Ascending aorta (tissue), 2 donors: ENCODE measurements at regions of chr17 and their contacts with region 1.

Region 1: DNA sequence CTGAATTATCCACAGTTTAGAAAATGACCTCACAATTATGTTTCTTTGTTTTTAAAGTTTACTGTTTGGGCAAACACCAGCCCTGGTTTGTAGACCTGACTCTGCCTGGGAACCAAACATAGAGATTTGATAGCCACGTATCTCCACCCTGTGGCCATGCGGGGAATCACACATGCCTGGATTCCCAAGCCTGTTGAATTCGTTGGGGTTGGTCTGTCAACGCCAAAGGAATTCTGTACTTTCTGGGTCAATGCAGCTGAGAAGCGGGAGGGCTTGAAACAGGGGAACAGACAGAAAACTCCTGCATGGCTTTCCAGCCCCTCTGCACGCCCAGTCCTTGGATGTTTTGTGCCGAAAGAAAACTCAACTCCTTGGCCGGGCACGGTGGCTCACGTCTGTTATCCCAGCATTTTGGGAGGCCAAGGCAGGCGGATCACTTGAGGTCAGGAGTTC is 27.0 kb downstream of the CD300A start:
- DNase-seq: peak; percentile 21 to 81
- H3K4me3 ChIP-seq: no peak overlapping the region
- H3K27ac ChIP-seq: no peak overlapping the region
- H3K4me1 ChIP-seq: no peaks in the 10 kb centered on the region
- H3K27me3 ChIP-seq: no peaks in the 10 kb centered on the region
- CTCF ChIP-seq: peak; percentile 86 to 90 (median 89)

Region 2: GRCh38 chr17:74368092-74369081 is 125.0 kb before region 1 on chr17:
- intact Hi-C with region 1: loop called (anchors 1 kb)
- DNase-seq: peak in 1 of 2 donors; percentile 84
- H3K4me3 ChIP-seq: no peak overlapping the region
- H3K27ac ChIP-seq: no peak overlapping the region
- H3K4me1 ChIP-seq: no peaks in the 10 kb centered on the region
- H3K27me3 ChIP-seq: no peaks in the 10 kb centered on the region
- CTCF ChIP-seq: peak; percentile 87 to 95 (median 94)

Region 3: DNA sequence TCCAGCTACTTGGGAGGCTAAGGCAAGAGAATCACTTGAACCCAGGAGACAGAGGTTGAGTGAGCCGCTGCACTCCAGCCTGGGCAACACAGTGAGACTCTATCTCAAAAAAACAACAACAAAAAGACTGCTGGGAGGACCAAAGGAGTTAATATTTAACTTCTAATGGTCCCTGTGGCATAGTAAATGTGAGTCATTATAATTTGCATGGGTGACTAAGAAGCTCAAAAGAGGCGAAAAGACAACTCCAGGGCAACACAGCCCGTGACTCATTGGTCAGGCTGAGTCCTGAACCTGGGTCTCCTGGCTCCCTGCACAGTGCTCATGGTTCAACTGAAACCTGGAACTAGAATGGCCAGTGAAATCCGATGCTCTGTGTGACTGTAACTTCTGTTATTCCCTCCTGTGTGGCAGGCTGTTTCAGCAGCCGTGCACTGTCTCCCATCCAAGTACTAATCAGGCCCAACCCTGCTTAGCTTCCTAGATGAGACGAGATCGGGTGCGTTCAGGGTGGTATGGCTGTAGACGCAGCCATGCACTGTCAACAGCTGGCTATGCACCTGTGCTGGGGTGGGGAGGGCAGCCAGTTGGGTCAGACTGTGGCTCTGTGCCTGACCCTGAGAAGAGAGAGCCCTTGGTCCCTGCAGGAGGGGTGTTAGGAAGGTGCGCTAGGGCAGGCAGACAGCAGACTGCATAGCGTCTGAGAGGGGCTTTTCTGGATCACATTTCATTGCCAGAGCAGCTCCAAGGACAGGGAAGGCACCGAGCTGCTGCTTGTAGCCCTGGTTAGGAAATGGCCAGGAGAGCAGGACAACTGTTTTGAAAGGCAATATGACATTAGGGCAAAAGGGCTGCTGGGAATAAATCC is 76.0 kb before region 1 on chr17:
- intact Hi-C with region 1: no loop called
- DNase-seq: no peak
- H3K4me3 ChIP-seq: no peak overlapping the region
- H3K27ac ChIP-seq: no peak overlapping the region
- H3K4me1 ChIP-seq: no peaks in the 10 kb centered on the region
- H3K27me3 ChIP-seq: no peaks in the 10 kb centered on the region
- CTCF ChIP-seq: no peak